Kidney (tissue), 22 donors: ENCODE measurements at regions of chr4 and their contacts with region 1.

Region 1: DNA sequence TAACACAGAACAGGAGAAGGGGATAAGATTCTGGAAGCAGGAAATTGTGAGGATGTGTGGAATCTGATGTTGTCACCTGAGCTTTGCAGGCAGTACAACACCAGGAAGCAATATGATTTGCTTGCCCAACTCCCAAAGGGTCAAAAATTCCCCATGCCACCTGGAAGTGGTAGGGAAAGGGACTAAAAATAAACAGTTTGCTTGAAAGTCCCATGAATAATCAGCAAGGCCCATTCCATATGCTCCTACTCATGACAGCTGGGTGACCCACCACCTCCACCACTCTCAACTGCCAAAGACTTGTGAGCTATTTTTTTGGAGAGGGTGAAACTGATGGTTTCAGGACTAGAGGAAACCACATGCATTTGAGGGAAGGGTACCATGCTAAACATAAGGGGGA is 168.4 kb downstream of the KCNIP4 start:
- DNase-seq: no peak
- H3K4me3 ChIP-seq: no peak overlapping the region
- H3K27ac ChIP-seq: no peak overlapping the region
- H3K4me1 ChIP-seq: no peaks in the 10 kb centered on the region
- H3K27me3 ChIP-seq: no peaks in the 10 kb centered on the region
- CTCF ChIP-seq: no peak

Region 2: DNA sequence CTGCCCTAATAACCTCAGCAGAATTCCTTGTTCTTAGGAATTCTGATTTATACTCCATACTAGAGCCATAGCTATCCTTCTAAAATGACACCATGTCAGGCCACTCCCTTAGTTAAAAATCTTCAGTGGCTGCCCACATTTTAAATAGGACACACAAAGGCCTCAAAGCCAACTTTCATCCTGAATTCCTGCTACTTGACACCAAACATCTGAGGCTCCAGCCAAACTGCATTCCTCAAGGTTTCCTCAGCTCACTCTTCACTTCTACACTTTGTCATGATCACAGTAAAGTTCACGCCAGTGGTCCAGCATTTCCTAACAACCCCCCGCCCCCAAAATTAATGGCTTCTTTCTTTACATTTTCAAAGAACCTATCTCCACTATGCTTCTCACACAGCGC is 611.4 kb after region 1 on chr4:
- intact Hi-C with region 1: loop called (anchors 10 kb)
- DNase-seq: no peak
- H3K4me3 ChIP-seq: no peak overlapping the region
- H3K27ac ChIP-seq: no peak overlapping the region
- H3K4me1 ChIP-seq: peaks cover 0 to 4% (median 0%) of the 10 kb centered on the region in 3 donors
- H3K27me3 ChIP-seq: no peaks in the 10 kb centered on the region
- CTCF ChIP-seq: no peak

Region 3: DNA sequence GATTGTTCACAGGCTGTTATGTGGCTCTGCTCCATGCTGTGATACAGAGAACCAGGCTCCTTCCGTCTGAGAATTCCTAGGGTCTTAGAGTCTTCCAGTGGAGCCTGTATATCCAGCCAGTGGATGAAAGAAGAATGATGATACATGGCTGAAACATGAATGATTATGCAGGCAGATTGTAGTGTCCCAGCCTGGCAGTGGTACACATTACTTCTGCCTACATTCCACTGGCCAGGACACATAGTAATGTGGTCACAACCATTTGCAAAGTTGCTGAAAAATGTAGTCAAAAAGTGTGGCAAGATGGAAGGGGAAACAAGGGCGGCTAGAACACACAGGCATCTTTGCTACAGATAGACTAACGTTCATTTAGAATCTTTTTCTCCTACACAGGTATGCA is 908.1 kb after region 1 on chr4:
- intact Hi-C with region 1: loop called (anchors 10 kb)
- DNase-seq: no peak
- H3K4me3 ChIP-seq: no peak overlapping the region
- H3K27ac ChIP-seq: no peak overlapping the region
- H3K4me1 ChIP-seq: no peaks in the 10 kb centered on the region
- H3K27me3 ChIP-seq: no peaks in the 10 kb centered on the region
- CTCF ChIP-seq: no peak